Activated CD8-positive, alpha-beta memory T cell treated with anti-CD3 and anti-CD28 coated beads, Interleukin-2, amount 10 ng/mL, durations not matched to agents 7 days and 5 days (primary cell): ENCODE measurements at regions of chr5 and their contacts with region 1.

Region 1: GRCh38 chr5:98768160-98769005 is 5.1 kb upstream of the RGMB start:
- DNase-seq: peak; percentile 51
- ATAC-seq: peak; percentile 39
- H3K4me3 Mint-ChIP-seq: peak overlapping the region; percentile 81
- H3K27ac Mint-ChIP-seq: no peak overlapping the region
- H3K4me1 Mint-ChIP-seq: peaks cover 35% of the 10 kb centered on the region
- H3K27me3 Mint-ChIP-seq: peaks cover 70% of the 10 kb centered on the region

Region 2: DNA sequence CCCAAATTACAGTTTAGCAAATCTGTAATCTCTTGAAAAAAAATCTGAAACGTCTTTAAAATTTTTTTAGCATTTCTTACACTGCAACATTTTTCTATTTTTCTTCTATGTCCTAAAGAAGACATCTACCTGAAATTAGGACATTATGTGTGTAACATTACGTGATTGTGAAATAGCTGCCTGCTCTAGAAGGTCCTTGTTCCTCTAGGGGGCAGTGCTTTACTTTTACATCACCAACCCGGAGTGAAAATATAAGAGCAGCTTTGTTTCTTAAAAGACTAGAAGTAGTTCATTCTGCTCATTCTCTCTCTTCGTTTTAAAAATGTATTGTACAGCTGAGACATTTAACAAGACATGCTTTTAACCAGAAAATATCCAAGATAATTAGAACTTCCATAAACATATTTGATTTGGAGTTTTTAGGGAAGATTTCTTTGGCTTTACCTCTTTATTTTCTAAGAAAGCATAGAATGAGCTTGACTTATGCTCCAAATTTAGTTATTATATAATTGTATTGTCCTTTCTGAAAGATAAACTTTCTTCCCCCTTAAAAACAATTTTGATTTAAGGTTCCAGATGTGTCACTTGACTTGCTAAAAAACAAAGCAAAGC is 1537.3 kb before region 1 on chr5:
- CTCF ChIA-PET with region 1: interaction called, 12 read pairs
- DNase-seq: no peak
- ATAC-seq: peak; percentile 72
- H3K4me3 Mint-ChIP-seq: no peak overlapping the region
- H3K27ac Mint-ChIP-seq: no peak overlapping the region
- H3K4me1 Mint-ChIP-seq: peaks cover 1% of the 10 kb centered on the region
- H3K27me3 Mint-ChIP-seq: peaks cover 5% of the 10 kb centered on the region

Region 3: DNA sequence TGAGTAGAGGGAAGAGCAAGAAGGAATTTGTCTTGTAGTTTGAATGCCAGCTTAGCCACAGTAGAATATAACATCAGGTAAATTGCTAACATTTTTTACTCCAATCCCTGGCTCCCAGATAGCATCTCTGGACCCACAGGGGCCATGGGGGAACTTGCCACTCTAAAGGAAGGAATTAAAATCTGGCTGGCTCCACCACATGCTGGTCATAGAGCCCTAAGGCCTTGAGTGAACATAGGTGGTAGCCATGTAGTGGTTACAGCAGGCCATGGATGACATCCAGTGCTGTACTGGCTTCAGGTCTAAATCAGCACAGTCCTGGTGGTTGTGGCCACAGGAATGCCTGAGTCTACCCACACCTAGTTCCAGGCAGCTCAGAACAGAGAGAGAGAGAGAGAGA is 104.9 kb before region 1 on chr5:
- CTCF ChIA-PET with region 1: no interaction called
- DNase-seq: no peak
- ATAC-seq: no peak
- H3K4me3 Mint-ChIP-seq: no peak overlapping the region
- H3K27ac Mint-ChIP-seq: no peak overlapping the region
- H3K4me1 Mint-ChIP-seq: no peaks in the 10 kb centered on the region
- H3K27me3 Mint-ChIP-seq: no peaks in the 10 kb centered on the region

Region 4: GRCh38 chr5:98780390-98780789 is 12.0 kb after region 1 on chr5:
- CTCF ChIA-PET with region 1: interaction called, 35 read pairs
- DNase-seq: no peak
- ATAC-seq: no peak
- H3K4me3 Mint-ChIP-seq: no peak overlapping the region
- H3K27ac Mint-ChIP-seq: no peak overlapping the region
- H3K4me1 Mint-ChIP-seq: peaks cover under 1% of the 10 kb centered on the region
- H3K27me3 Mint-ChIP-seq: peaks cover 18% of the 10 kb centered on the region

Region 5: DNA sequence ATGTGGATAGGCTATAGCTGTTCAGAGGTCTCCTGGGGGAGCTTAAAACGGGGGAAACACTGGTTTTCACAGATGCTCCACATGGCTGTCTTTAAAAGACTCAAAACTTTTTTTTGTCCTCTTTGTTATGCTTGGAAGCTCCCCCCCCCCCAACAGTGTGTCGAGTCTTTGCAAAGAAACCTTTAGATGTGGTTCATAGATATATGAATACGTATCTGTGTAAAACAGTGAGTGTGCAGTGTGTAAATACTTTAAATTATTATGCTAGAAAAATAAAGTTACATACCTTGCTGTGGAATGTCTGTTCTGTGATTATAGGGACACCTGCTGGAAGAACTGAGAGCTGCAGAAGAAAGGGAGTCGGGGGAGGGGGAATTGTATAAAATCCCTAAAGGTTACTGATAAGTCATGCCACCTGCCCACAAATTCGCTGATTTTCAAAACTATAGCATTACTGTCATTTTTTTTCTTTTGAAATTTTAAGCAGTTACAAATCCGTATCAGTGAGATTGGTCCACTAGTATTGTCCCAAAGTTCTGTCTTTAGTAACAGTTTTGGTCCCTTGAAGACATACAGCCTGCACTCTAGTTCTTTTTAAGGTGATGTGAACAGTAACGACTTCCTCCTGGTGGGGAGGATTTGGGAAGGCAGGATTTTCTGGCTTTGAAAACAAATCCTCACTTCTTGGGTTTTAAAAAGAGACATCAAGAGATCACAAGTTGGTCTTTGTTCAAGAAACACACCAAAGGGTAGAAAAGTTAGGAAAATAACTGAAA is 28.0 kb after region 1 on chr5:
- CTCF ChIA-PET with region 1: interaction called, 60 read pairs
- DNase-seq: peak; percentile 54
- ATAC-seq: no peak
- H3K4me3 Mint-ChIP-seq: no peak overlapping the region
- H3K27ac Mint-ChIP-seq: no peak overlapping the region
- H3K4me1 Mint-ChIP-seq: no peaks in the 10 kb centered on the region
- H3K27me3 Mint-ChIP-seq: no peaks in the 10 kb centered on the region

Region 6: GRCh38 chr5:98825582-98826375 is 57.4 kb after region 1 on chr5:
- CTCF ChIA-PET with region 1: no interaction called
- DNase-seq: no peak
- ATAC-seq: no peak
- H3K4me3 Mint-ChIP-seq: no peak overlapping the region
- H3K27ac Mint-ChIP-seq: no peak overlapping the region
- H3K4me1 Mint-ChIP-seq: no peaks in the 10 kb centered on the region
- H3K27me3 Mint-ChIP-seq: no peaks in the 10 kb centered on the region

Region 7: DNA sequence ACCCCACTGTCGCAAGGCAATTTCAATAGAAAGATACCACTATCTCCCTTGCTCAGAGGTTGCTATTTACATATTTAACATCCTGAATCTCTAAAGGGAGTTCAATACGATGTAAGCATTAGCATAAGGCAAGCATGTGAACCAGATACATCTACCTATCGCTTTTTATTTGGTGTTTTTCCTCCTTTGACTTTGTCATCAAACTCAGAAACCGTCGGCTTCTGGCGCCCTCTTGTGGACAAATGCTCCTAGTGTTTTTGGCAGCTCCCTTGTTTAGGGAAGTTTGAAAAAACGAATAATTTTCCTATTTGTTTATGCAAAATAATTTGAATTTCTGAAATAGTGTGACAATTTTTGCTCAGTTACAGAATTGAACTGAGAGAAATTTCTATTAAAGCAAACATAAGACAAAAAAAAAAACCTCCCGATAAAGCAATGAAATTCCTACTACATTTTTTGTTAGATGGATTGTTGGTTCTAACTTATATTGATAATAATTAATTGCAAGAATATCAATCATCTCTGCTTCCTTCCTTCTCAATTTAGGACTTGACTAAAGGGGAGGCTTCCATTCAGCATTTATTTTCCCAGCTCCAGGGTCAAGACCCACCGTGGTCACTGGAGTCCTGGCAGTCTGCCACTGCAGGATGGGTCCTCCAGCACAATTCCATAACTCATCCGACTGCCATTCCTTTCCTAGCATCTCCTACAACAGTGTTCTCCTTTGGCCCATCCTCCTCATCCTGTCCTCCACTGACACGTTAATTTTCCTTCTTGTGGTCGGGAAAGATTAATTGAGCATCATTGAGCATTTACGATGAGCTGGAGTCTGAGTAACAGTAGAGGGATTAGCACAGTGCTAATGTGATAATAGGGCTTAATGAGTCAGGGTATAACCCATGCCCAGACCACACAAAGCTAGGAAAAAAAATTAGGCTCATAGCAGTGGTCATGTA is 292.2 kb after region 1 on chr5:
- CTCF ChIA-PET with region 1: interaction called, 15 read pairs
- DNase-seq: peak; percentile 89
- ATAC-seq: peak; percentile 63
- H3K4me3 Mint-ChIP-seq: no peak overlapping the region
- H3K27ac Mint-ChIP-seq: no peak overlapping the region
- H3K4me1 Mint-ChIP-seq: peaks cover 6% of the 10 kb centered on the region
- H3K27me3 Mint-ChIP-seq: peaks cover 10% of the 10 kb centered on the region